ENCODE measurements at regions of chr12 and their contacts with region 1.

Region 1: GRCh38 chr12:6195665-6196535 is 4.3 kb upstream of the CD9 start:
- DNase-seq: peak; percentile 93
- ATAC-seq: peak; percentile 72
- H3K4me3 ChIP-seq: no peak overlapping the region; the same call in 1 of the 2 replicates
- H3K27ac ChIP-seq: peak overlapping the region; percentile 91
- H3K4me1 ChIP-seq: peaks cover 27% of the 10 kb centered on the region
- H3K27me3 ChIP-seq: no peaks in the 10 kb centered on the region
- CTCF ChIP-seq: peak; percentile 75

Region 2: GRCh38 chr12:6062757-6063735 is 132.9 kb before region 1 on chr12:
- CTCF ChIA-PET with region 1: interaction called, 3 read pairs
- POLR2A ChIA-PET with region 1: interaction called, 3 read pairs
- intact Hi-C with region 1: loop called (anchors 1 kb)
- DNase-seq: peak; percentile 56
- ATAC-seq: peak; percentile 75
- H3K4me3 ChIP-seq: no peak overlapping the region
- H3K27ac ChIP-seq: no peak overlapping the region
- H3K4me1 ChIP-seq: no peaks in the 10 kb centered on the region
- H3K27me3 ChIP-seq: no peaks in the 10 kb centered on the region
- CTCF ChIP-seq: peak; percentile 81

Region 3: DNA sequence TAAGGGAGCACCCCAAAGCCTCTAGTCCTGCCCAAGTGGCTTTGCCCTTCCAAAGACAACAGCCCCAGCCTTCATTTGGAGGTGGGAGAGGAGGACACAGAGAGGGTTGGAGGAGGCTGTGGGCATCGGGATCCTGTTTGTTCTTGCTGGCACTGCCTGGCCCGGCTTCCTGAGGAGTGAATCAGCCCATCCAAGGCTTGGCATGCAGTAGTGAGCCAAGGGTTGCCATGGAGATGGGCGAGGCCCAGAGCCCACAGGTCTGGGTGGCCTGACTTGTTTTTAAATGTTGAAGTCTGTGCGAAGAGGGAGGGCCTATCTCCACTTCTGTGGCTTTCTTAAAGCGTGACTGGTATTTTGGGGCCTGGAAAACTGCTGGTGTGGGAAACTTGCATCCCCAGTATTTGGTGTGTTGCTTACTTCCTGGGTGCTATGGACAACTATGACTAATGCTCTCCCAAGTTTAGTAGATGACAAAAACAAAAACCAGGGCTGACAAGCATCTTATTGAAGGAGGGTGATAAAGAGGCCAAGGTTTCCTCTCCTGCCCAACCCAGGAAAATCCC is 20.1 kb after region 1 on chr12:
- CTCF ChIA-PET with region 1: no interaction called
- POLR2A ChIA-PET with region 1: interaction called, 3 read pairs
- intact Hi-C with region 1: loop called (anchors 1 kb)
- DNase-seq: peak; percentile 96
- ATAC-seq: peak; percentile 89
- H3K4me3 ChIP-seq: peak overlapping the region; percentile 30; the same call in 1 of the 2 replicates
- H3K27ac ChIP-seq: peak overlapping the region; percentile 99
- H3K4me1 ChIP-seq: peaks cover 72% of the 10 kb centered on the region
- H3K27me3 ChIP-seq: no peaks in the 10 kb centered on the region
- CTCF ChIP-seq: no peak

Region 4: DNA sequence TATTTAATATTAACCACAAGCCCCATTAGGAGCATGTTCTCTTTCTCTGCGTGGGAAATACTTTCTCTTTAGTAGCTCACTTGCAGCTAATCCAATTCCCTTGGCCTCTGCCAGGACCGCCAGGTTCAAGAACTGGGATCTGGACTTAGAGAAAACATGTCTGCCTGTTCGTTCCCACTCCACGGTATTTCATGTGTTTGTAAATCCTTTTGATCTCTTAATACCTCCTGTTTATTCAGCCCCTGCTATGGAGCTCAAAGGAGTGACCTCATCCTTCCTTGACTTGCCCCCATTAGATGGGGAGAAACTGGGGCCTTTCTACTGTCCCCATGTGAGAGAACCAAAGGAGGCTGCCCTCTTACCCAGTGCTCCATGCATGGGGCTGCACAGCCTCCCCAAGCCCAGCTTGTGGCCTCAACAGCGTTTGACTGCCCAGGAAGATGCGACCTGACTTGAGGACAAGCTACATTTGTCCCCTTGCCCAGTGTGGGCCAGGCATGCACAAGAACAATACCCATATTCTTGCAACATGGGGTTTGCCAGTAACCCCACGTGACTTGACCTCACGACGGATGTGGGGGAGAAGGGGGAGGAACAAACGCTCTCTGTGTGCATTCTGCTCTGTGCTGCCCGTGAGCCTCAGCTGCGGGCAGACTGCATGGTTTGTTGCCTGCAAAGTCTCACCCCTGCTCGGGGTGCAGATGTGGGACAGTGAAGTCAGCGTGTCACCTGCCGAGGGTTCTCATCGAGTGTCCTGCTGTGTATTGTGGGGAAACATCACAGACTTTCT is 34.6 kb after region 1 on chr12:
- CTCF ChIA-PET with region 1: interaction called, 5 read pairs
- POLR2A ChIA-PET with region 1: interaction called, 4 read pairs
- intact Hi-C with region 1: loop called (anchors 1 kb)
- DNase-seq: peak; percentile 47
- ATAC-seq: no peak; the same call in 1 of the 2 replicates
- H3K4me3 ChIP-seq: peak overlapping the region; percentile 52; the same call in 1 of the 2 replicates
- H3K27ac ChIP-seq: peak overlapping the region; percentile 99
- H3K4me1 ChIP-seq: peaks cover 65% of the 10 kb centered on the region
- H3K27me3 ChIP-seq: no peaks in the 10 kb centered on the region
- CTCF ChIP-seq: no peak

Region 5: DNA sequence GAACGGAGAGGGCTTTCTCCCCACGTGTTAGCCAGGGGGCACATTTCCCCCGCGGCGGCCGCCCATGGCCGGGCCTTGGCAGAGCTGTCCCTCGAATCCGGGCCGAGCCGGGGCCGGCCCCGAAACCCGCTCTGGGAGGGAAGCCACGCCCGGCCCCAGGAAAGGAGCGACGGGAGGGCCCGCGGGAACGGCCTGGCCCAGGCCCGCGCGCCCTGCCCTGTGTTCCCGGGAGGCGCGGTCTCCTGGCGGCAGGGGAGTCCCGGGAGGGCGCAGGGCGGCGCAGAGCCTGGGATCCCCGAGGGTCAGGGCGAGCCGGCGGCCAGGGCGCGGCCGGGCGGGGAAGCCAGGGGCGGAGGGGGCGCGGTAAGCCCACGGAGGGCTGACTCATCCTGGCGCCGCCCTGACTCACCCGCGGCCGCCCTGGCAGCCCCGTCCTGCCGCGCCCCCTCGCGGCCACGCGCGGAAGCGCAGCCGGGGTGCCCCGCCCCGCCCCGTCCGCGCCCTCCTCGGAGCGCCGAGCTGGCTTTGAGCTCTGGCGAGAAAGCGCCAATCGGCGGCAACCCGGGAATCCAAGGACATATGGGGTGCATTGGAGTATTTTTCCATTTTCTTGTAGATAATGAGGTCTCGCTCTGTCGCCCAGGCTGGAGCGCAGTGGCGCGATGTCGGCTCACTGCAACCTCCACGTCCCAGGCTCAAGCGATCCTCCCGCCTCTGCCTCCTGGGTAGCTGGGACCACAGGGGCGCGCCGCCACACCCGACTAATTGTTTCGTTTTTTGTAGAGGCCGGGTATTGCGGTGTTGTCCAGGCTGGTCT is 82.7 kb after region 1 on chr12:
- CTCF ChIA-PET with region 1: interaction called, 31 read pairs
- POLR2A ChIA-PET with region 1: interaction called, 17 read pairs
- intact Hi-C with region 1: loop called (anchors 1 kb)
- DNase-seq: peak; percentile 88
- ATAC-seq: peak; percentile 67
- H3K4me3 ChIP-seq: peak overlapping the region; percentile 69
- H3K27ac ChIP-seq: peak overlapping the region; percentile 100
- H3K4me1 ChIP-seq: peaks cover 61% of the 10 kb centered on the region
- H3K27me3 ChIP-seq: no peaks in the 10 kb centered on the region
- CTCF ChIP-seq: peak; percentile 53; the same call in 1 of the 2 replicates

Region 6: GRCh38 chr12:6285063-6285477 is 89.2 kb after region 1 on chr12:
- CTCF ChIA-PET with region 1: interaction called, 31 read pairs
- POLR2A ChIA-PET with region 1: interaction called, 17 read pairs
- intact Hi-C with region 1: loop called (anchors 1 kb)
- DNase-seq: peak; percentile 72
- ATAC-seq: peak; percentile 34
- H3K4me3 ChIP-seq: no peak overlapping the region
- H3K27ac ChIP-seq: peak overlapping the region; percentile 96
- H3K4me1 ChIP-seq: peaks cover 49% of the 10 kb centered on the region
- H3K27me3 ChIP-seq: no peaks in the 10 kb centered on the region
- CTCF ChIP-seq: peak; percentile 85

Region 7: DNA sequence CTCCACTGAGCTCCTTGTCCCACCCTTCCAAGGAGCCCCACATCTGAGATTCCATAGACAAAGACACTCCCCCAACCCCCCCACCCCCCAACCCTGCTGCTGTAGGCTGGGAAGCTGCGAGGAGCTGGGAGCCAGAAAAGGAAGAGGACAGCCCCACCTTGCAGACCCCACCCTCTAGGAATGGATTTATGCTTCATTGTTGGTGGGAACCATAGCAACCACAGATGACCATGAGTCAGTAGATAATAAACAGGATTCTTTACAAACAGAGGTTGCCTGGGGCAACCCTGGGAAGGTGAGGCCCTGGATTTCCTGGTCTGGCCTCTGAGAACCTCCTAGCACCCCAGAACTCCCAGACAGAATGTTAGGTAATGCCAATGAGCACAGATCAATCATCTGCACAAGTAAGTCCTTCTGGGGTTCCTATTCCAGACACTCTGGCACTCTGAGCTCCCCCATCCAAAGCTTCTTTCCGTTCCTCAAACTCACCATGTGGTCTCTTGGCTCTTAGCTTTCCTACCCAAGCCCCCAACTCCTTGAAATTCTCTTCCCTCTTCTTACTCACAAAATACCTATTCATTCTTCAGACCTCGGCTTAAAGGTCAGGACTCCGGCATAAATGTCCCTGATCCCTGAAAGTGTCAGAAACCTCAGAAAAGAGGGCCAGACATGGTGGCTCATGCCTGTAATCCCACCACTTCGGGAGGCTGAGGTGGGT is 99.4 kb after region 1 on chr12:
- CTCF ChIA-PET with region 1: no interaction called
- POLR2A ChIA-PET with region 1: interaction called, 13 read pairs
- intact Hi-C with region 1: no loop called
- DNase-seq: peak; percentile 88
- ATAC-seq: peak; percentile 73
- H3K4me3 ChIP-seq: no peak overlapping the region
- H3K27ac ChIP-seq: peak overlapping the region; percentile 90
- H3K4me1 ChIP-seq: peaks cover 47% of the 10 kb centered on the region
- H3K27me3 ChIP-seq: no peaks in the 10 kb centered on the region
- CTCF ChIP-seq: no peak